Transverse colon (tissue), 4 donors: ENCODE measurements at regions of chr3 and their contacts with region 1.

Region 1: DNA sequence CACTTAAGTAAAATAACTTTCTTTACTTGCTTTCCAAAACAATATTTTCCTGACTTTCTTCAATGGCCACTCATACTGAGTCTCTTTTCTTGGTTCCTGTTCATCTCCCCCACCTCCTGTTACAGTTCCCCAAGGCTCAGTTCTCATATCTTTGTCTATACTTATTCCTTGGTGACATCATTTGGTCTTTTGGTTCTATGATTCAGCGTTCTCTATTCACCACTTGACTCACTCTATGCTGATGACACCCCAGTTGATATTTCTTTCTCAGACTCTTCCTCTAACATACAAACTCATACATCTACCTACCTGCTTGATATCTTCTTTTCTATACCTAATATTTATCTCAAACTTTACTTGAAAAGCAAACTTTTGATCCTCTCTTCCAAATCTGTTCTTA is 85.0 kb upstream of the P3H2 start:
- DNase-seq: no peak
- H3K4me3 ChIP-seq: no peak overlapping the region
- H3K27ac ChIP-seq: no peak overlapping the region
- H3K4me1 ChIP-seq: peaks cover 0 to 2% (median 0%) of the 10 kb centered on the region in 4 donors
- H3K27me3 ChIP-seq: no peaks in the 10 kb centered on the region
- CTCF ChIP-seq: no peak
- EP300 ChIP-seq: no peak
- POLR2A ChIP-seq: no peak

Region 2: DNA sequence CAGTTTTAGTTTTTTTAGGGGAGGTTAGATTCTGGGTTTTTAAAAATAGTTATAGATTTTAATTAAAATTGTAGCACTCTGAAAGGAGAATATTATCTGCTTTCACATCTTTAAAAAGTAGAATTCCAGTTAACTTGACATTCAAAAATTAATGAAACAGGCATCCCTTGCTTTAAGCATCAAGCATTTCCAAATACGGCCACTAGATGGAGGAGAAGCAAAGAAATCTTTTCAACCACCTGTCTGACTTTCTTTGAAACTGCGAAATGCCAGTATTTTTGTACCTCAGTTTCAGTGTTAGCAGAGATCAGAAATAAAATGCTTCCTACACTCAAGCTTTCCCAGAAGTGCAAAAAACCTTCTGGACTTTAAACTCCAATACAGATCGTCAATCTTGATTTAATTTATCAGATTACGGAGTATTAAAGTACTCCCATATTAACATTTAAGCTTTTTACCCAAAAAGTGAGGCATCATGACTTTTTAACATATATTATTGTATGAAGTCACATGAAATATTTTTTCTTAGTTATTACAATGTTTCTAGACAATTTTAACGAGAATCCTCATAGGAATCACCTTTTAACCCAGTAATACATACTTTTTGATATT is 238.4 kb before region 1 on chr3:
- in situ Hi-C with region 1: loop called in 2 of 4 experiments (anchors 5 to 10 kb)
- intact Hi-C with region 1: loop called (anchors 5 kb)
- DNase-seq: no peak
- H3K4me3 ChIP-seq: no peak overlapping the region
- H3K27ac ChIP-seq: no peak overlapping the region
- H3K4me1 ChIP-seq: no peaks in the 10 kb centered on the region
- H3K27me3 ChIP-seq: no peaks in the 10 kb centered on the region
- CTCF ChIP-seq: peak; percentile 79 to 89 (median 86)
- EP300 ChIP-seq: no peak
- POLR2A ChIP-seq: no peak

Region 3: GRCh38 chr3:190288836-190289235 is 83.1 kb after region 1 on chr3:
- in situ Hi-C with region 1: no loop called
- intact Hi-C with region 1: no loop called
- DNase-seq: no peak
- H3K4me3 ChIP-seq: no peak overlapping the region
- H3K27ac ChIP-seq: no peak overlapping the region
- H3K4me1 ChIP-seq: no peaks in the 10 kb centered on the region
- H3K27me3 ChIP-seq: no peaks in the 10 kb centered on the region
- CTCF ChIP-seq: no peak
- EP300 ChIP-seq: no peak
- POLR2A ChIP-seq: no peak

Region 4: DNA sequence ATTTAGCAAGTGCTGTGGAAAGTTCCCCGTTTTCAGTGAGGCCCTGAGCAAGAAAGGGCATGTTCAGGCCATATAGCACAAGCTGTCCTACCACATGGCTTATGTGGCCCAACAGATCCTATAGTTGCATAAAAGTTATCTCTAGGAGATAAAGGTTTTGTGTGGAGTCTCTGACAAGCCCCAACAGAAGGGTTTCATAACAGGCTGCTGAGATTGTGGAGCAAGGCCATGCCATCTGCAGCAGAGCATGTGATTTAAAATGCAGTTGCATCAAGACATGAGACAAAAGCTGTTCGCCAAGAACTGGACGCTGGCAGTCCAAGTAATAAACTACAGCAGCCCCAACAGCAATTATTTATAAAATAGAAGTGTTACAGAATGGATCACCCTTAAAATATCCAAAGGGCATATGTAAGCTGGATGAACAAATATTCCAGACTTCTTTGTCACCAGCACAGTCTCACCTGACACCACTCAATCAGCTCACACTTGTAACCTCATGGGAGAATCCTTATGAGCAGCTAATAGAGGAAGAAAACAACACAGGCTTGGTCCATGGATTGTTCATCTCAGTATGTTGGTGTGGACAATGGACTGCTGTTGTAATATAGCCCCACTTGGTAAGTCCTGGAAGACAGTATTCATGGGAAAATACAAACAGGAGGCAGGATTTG is 130.9 kb after region 1 on chr3:
- in situ Hi-C with region 1: no loop called
- intact Hi-C with region 1: no loop called
- DNase-seq: no peak
- H3K4me3 ChIP-seq: no peak overlapping the region
- H3K27ac ChIP-seq: no peak overlapping the region
- H3K4me1 ChIP-seq: no peaks in the 10 kb centered on the region
- H3K27me3 ChIP-seq: no peaks in the 10 kb centered on the region
- CTCF ChIP-seq: no peak
- EP300 ChIP-seq: no peak
- POLR2A ChIP-seq: no peak